ENCODE measurements at regions of chr1 and their contacts with region 1.

Region 1: DNA sequence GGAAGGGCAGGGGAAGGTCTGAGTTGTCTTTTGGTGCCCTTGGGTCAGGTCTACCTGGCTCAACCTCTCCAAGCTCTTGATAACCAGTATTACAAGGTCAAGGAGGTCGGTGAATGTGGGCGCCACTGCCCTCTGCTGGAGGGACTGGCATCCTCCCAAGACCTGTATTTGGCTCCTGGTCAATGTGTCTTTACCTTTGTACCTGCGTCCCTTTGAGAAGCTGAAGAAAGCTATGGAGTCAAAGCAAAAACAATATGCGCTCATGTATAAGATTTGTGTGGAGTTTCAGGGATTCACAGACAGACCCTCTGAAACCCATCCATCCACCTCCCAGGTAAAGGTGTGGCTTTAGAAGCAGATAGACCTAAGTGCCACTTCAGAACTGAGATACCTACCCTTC is 61.8 kb upstream of the NBL1 start:
- DNase-seq: peak; percentile 57 to 80 (median 66)
- H3K4me3 ChIP-seq: no peak overlapping the region
- H3K4me3 Mint-ChIP-seq: no peak overlapping the region
- H3K27ac ChIP-seq: no peak overlapping the region
- H3K27ac Mint-ChIP-seq: peak overlapping the region in 5 of 8 donors; percentile 31 to 89 (median 72)
- H3K4me1 ChIP-seq: no peaks in the 10 kb centered on the region
- H3K4me1 Mint-ChIP-seq: peaks cover 5 to 8% (median 7%) of the 10 kb centered on the region in 3 donors
- H3K27me3 ChIP-seq: no peaks in the 10 kb centered on the region
- H3K27me3 Mint-ChIP-seq: peaks cover 0 to 4% of the 10 kb centered on the region in 2 donors

Region 2: GRCh38 chr1:19240673-19241538 is 341.4 kb before region 1 on chr1:
- CTCF ChIA-PET with region 1: no interaction called
- POLR2A ChIA-PET with region 1: no interaction called
- DNase-seq: peak; percentile 48 to 64 (median 53)
- H3K4me3 ChIP-seq: no peak overlapping the region
- H3K4me3 Mint-ChIP-seq: peak overlapping the region in 1 of 7 donors; percentile 65
- H3K27ac ChIP-seq: no peak overlapping the region
- H3K27ac Mint-ChIP-seq: peak overlapping the region in 6 of 8 donors; percentile 8 to 81 (median 58)
- H3K4me1 ChIP-seq: no peaks in the 10 kb centered on the region
- H3K4me1 Mint-ChIP-seq: peaks cover 0 to 2% (median 0%) of the 10 kb centered on the region in 3 donors
- H3K27me3 ChIP-seq: no peaks in the 10 kb centered on the region
- H3K27me3 Mint-ChIP-seq: no peaks in the 10 kb centered on the region

Region 3: DNA sequence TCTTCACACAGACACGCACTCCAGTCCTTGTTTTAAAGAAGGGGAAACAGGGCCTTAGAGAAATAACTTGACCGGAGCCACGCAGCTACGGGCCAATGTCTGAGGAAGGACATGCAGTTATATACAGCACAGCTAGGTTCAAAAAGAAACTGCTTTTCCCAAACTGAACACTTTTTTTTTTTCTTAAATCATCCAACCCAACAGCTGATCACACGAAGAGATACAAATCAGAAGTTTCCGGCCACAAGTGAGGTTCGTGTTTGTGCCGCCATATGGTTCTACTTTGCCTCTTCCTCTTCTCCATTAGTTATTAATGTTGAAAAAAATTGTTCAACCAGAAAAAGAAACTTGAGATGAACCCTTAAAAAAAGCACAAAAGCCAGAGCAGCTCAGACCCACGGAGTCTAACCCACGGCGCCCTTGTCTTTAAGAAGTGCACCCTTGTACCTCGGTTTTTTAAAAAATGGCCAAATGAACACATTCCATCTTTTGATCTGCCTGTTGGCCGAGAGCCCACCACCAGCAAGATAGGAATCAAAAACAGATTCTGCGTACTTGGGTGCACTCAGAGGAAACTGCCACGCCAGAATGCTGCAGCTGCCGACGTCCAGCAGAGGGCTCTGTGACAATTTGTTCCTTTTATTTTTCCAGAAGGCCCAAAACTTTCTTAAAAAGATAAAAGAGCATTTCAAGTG is 191.3 kb before region 1 on chr1:
- CTCF ChIA-PET with region 1: interaction called, 30 read pairs
- POLR2A ChIA-PET with region 1: interaction called, 3 read pairs
- DNase-seq: peak; percentile 40 to 83 (median 76)
- H3K4me3 ChIP-seq: peak overlapping the region; percentile 44
- H3K4me3 Mint-ChIP-seq: peak overlapping the region; percentile 74 to 93 (median 80)
- H3K27ac ChIP-seq: peak overlapping the region; percentile 49
- H3K27ac Mint-ChIP-seq: peak overlapping the region; percentile 87 to 98 (median 91)
- H3K4me1 ChIP-seq: peaks cover 56% of the 10 kb centered on the region
- H3K4me1 Mint-ChIP-seq: peaks cover 70 to 92% (median 80%) of the 10 kb centered on the region in 3 donors
- H3K27me3 ChIP-seq: no peaks in the 10 kb centered on the region
- H3K27me3 Mint-ChIP-seq: peaks cover 0 to 2% of the 10 kb centered on the region in 2 donors

Region 4: DNA sequence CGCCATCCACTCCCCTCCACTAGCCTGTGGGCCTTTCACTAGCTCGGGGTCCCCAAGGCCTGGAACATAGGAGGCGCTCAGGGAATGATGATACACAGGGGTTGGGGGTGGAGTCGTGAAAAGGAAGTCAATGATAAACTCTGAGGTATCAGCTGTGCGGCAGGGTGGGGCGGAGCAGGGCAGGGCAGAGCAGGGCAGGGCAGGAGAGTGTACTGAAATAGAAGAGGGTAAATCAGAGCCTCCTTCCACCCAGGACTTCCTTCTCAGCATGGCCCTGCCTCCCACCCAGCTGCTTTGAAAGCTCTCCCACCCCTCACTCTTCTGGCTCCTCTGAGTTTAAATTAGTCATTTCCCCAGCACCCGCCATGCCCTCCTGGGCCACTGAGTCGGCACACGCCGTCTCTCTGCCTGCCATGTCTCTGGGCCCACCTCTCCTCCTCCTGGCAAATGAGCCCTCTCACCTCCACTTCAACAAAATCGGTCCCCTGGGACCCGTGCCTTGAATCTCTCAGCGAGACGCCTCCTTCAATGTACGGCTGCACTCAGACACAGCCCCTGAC is 113.8 kb before region 1 on chr1:
- CTCF ChIA-PET with region 1: interaction called, 10 read pairs
- POLR2A ChIA-PET with region 1: no interaction called
- DNase-seq: peak; percentile 43 to 80 (median 62)
- H3K4me3 ChIP-seq: peak overlapping the region; percentile 47
- H3K4me3 Mint-ChIP-seq: peak overlapping the region; percentile 67 to 89 (median 82)
- H3K27ac ChIP-seq: peak overlapping the region; percentile 53
- H3K27ac Mint-ChIP-seq: peak overlapping the region; percentile 87 to 99 (median 96)
- H3K4me1 ChIP-seq: peaks cover 95% of the 10 kb centered on the region
- H3K4me1 Mint-ChIP-seq: peaks cover 84 to 97% (median 97%) of the 10 kb centered on the region in 3 donors
- H3K27me3 ChIP-seq: no peaks in the 10 kb centered on the region
- H3K27me3 Mint-ChIP-seq: no peaks in the 10 kb centered on the region

Region 5: GRCh38 chr1:19596714-19597495 is 14.6 kb after region 1 on chr1:
- CTCF ChIA-PET with region 1: interaction called, 13 read pairs
- POLR2A ChIA-PET with region 1: no interaction called
- DNase-seq: peak; percentile 97 to 99 (median 98)
- H3K4me3 ChIP-seq: peak overlapping the region; percentile 94
- H3K4me3 Mint-ChIP-seq: peak overlapping the region; percentile 87 to 98 (median 97)
- H3K27ac ChIP-seq: peak overlapping the region; percentile 100
- H3K27ac Mint-ChIP-seq: peak overlapping the region; percentile 97 to 100 (median 100)
- H3K4me1 ChIP-seq: peaks cover 53% of the 10 kb centered on the region
- H3K4me1 Mint-ChIP-seq: peaks cover 42 to 59% (median 52%) of the 10 kb centered on the region in 3 donors
- H3K27me3 ChIP-seq: no peaks in the 10 kb centered on the region
- H3K27me3 Mint-ChIP-seq: peaks cover 0 to 5% of the 10 kb centered on the region in 2 donors

Region 6: DNA sequence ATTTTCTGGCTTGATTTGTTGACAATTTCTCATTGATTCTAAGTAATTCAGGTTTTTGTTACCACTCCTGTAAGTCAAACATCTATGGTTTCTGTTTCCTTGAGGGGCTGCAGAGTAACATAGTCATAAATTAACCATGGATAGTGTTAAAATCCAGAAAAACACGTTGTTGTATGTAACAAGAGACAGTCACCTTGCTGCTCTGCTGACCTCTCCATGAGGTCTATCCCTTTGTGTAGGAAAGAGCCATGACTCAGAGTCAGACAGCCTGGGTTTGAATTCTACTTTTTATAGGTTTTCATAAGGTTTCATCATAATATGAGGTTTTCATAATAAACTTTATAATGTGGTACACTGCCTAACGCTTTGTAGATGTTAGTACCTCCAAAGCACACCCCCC is 34.2 kb after region 1 on chr1:
- CTCF ChIA-PET with region 1: no interaction called
- POLR2A ChIA-PET with region 1: no interaction called
- DNase-seq: no peak
- H3K4me3 ChIP-seq: no peak overlapping the region
- H3K4me3 Mint-ChIP-seq: no peak overlapping the region
- H3K27ac ChIP-seq: no peak overlapping the region
- H3K27ac Mint-ChIP-seq: peak overlapping the region in 1 of 8 donors; percentile 69
- H3K4me1 ChIP-seq: no peaks in the 10 kb centered on the region
- H3K4me1 Mint-ChIP-seq: peaks cover 14 to 36% (median 27%) of the 10 kb centered on the region in 3 donors
- H3K27me3 ChIP-seq: no peaks in the 10 kb centered on the region
- H3K27me3 Mint-ChIP-seq: no peaks in the 10 kb centered on the region